CD4-positive, alpha-beta T cell (primary cell): ENCODE measurements at regions of chr14 and their contacts with region 1.

Region 1: DNA sequence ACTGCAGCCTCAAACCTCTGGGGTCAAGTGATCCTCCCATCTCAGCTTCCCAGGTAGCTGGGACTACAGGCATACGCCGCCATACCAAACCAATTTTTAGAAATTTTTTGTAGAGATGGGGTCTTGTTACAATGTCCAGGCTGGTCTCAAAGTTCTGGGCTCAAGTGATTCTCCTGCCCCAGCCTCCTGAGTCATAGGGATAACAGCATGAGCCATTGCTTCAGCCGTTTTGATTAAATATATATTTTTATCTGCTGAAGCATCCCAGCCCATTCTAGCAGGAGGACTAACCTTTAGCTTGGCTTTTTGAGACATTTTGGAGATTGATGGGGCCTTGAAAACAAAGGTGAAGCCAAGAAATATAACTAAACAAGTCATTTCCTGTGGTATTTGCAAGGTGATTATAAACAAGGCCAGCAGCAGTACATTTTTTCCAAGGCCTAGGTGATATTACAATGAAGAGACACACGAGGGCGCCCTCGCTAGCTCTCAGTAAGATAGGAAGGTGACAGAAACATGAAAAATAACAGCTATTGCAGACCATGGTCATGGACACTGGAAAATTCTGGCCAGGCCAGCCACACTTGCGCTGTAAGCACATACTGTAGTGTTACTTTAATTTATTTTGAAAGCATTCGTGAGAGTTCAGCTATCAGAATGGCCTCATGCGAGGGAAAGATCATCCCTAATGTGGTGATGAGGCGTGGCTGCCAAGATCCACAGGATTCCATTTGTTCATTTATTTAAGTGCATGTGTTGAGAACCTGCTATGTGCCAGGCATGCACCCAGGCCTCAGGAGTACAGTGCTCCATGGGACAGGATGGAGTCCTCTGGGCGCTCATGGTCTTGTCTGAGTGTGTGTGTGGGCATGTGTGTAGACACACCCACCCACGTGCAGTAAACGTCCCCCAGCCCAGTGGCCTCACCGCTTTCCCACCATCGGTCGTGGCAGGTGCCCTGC is 63.5 kb downstream of the DGLUCY start:
- DNase-seq: peak; percentile 47 to 89 (median 58)
- ATAC-seq: peak; percentile 93
- H3K4me3 ChIP-seq: no peak overlapping the region
- H3K4me3 Mint-ChIP-seq: no peak overlapping the region
- H3K27ac ChIP-seq: peak overlapping the region in 1 of 2 donors; percentile 40
- H3K27ac Mint-ChIP-seq: peak overlapping the region; percentile 47
- H3K4me1 ChIP-seq: peaks cover 17% of the 10 kb centered on the region
- H3K4me1 Mint-ChIP-seq: peaks cover 17% of the 10 kb centered on the region
- H3K27me3 ChIP-seq: no peaks in the 10 kb centered on the region
- H3K27me3 Mint-ChIP-seq: no peaks in the 10 kb centered on the region
- CTCF ChIP-seq: peak; percentile 91

Region 2: GRCh38 chr14:90903101-90903500 is 274.3 kb before region 1 on chr14:
- CTCF ChIA-PET with region 1: interaction called, 103 read pairs
- POLR2A ChIA-PET with region 1: interaction called, 29 read pairs
- intact Hi-C with region 1: loop called (anchors 1 kb)
- DNase-seq: peak; percentile 33 to 78 (median 47)
- ATAC-seq: peak; percentile 94
- H3K4me3 ChIP-seq: no peak overlapping the region
- H3K4me3 Mint-ChIP-seq: no peak overlapping the region
- H3K27ac ChIP-seq: no peak overlapping the region
- H3K27ac Mint-ChIP-seq: no peak overlapping the region
- H3K4me1 ChIP-seq: no peaks in the 10 kb centered on the region
- H3K4me1 Mint-ChIP-seq: no peaks in the 10 kb centered on the region
- H3K27me3 ChIP-seq: no peaks in the 10 kb centered on the region
- H3K27me3 Mint-ChIP-seq: no peaks in the 10 kb centered on the region
- CTCF ChIP-seq: peak; percentile 86

Region 3: DNA sequence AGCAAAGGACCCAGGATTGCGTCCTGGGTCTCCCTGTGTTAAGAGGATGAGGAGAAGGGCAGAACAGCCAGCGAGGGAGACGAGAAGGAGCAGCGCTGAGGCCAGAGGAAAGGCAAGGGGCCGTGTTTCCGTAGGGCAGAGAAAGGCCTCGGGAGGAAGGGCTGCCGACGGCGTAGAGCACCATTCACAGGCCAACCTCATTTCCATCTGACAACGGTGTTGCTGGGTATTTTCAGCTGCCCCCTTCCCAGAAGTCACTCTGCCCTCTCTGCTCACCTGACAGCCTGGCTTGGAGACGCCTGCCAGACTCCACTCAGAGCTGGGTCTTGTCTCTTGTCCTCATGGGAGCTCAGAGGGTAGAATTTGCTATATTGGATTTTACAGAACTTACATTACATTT is 15.7 kb after region 1 on chr14:
- CTCF ChIA-PET with region 1: interaction called, 12 read pairs
- POLR2A ChIA-PET with region 1: interaction called, 13 read pairs
- intact Hi-C with region 1: no loop called
- DNase-seq: no peak
- ATAC-seq: no peak
- H3K4me3 ChIP-seq: no peak overlapping the region
- H3K4me3 Mint-ChIP-seq: no peak overlapping the region
- H3K27ac ChIP-seq: no peak overlapping the region
- H3K27ac Mint-ChIP-seq: no peak overlapping the region
- H3K4me1 ChIP-seq: peaks cover 15% of the 10 kb centered on the region
- H3K4me1 Mint-ChIP-seq: peaks cover 17% of the 10 kb centered on the region
- H3K27me3 ChIP-seq: no peaks in the 10 kb centered on the region
- H3K27me3 Mint-ChIP-seq: no peaks in the 10 kb centered on the region
- CTCF ChIP-seq: no peak

Region 4: GRCh38 chr14:91264151-91265150 is 87.1 kb after region 1 on chr14:
- CTCF ChIA-PET with region 1: interaction called, 13 read pairs
- POLR2A ChIA-PET with region 1: interaction called, 3 read pairs
- intact Hi-C with region 1: loop called in 1 of 2 experiments (anchors 5 kb)
- DNase-seq: peak in 5 of 14 experiments; percentile 30 to 65 (median 48)
- ATAC-seq: peak; percentile 50
- H3K4me3 ChIP-seq: peak overlapping the region; percentile 37
- H3K4me3 Mint-ChIP-seq: peak overlapping the region; percentile 75
- H3K27ac ChIP-seq: peak overlapping the region in 1 of 2 donors; percentile 29
- H3K27ac Mint-ChIP-seq: peak overlapping the region; percentile 24
- H3K4me1 ChIP-seq: peaks cover 42% of the 10 kb centered on the region
- H3K4me1 Mint-ChIP-seq: peaks cover 58% of the 10 kb centered on the region
- H3K27me3 ChIP-seq: no peaks in the 10 kb centered on the region
- H3K27me3 Mint-ChIP-seq: no peaks in the 10 kb centered on the region
- CTCF ChIP-seq: no peak